Gastrocnemius medialis (tissue), 4 donors: ENCODE measurements at regions of chr3 and their contacts with region 1.

Region 1: GRCh38 chr3:57252404-57252803 is 24.9 kb downstream of the APPL1 start:
- DNase-seq: peak; percentile 51 to 63
- ATAC-seq: peak; percentile 98
- H3K4me3 ChIP-seq: no peak overlapping the region
- H3K27ac ChIP-seq: peak overlapping the region; percentile 84 to 87 (median 86)
- H3K4me1 ChIP-seq: peaks cover 22 to 23% of the 10 kb centered on the region in 2 donors
- H3K27me3 ChIP-seq: no peaks in the 10 kb centered on the region
- CTCF ChIP-seq: no peak
- POLR2A ChIP-seq: peak; percentile 14 to 21

Region 2: GRCh38 chr3:57059411-57059810 is 193.0 kb before region 1 on chr3:
- in situ Hi-C with region 1: no loop called
- intact Hi-C with region 1: no loop called
- DNase-seq: no peak
- ATAC-seq: no peak
- H3K4me3 ChIP-seq: no peak overlapping the region
- H3K27ac ChIP-seq: no peak overlapping the region
- H3K4me1 ChIP-seq: no peaks in the 10 kb centered on the region
- H3K27me3 ChIP-seq: no peaks in the 10 kb centered on the region
- CTCF ChIP-seq: no peak
- POLR2A ChIP-seq: no peak

Region 3: GRCh38 chr3:57281715-57282114 is 29.3 kb after region 1 on chr3:
- in situ Hi-C with region 1: no loop called
- intact Hi-C with region 1: no loop called
- DNase-seq: no peak
- ATAC-seq: peak; percentile 53 to 67
- H3K4me3 ChIP-seq: no peak overlapping the region
- H3K27ac ChIP-seq: peak overlapping the region; percentile 1 to 70 (median 56)
- H3K4me1 ChIP-seq: no peaks in the 10 kb centered on the region
- H3K27me3 ChIP-seq: no peaks in the 10 kb centered on the region
- CTCF ChIP-seq: no peak
- POLR2A ChIP-seq: no peak

Region 4: GRCh38 chr3:57292159-57292896 is 39.9 kb after region 1 on chr3 and contains the start of gene ASB14:
- in situ Hi-C with region 1: no loop called
- intact Hi-C with region 1: loop called (anchors 5 kb)
- DNase-seq: no peak
- ATAC-seq: peak; percentile 75 to 84
- H3K4me3 ChIP-seq: peak within 1 kb of the TSS; percentile 19 to 40 (median 22)
- H3K27ac ChIP-seq: peak within 1 kb of the TSS; percentile 63 to 82 (median 69)
- H3K4me1 ChIP-seq: peaks cover 13 to 23% of the 10 kb centered on the region in 2 donors
- H3K27me3 ChIP-seq: no peaks in the 10 kb centered on the region
- CTCF ChIP-seq: no peak
- POLR2A ChIP-seq: no peak
- total RNA-seq, gene ASB14: 1.9 to 3.4 (median 2.6) TPM